ENCODE measurements at regions of chr7 and their contacts with region 1.

Region 1: GRCh38 chr7:114439581-114439980 is 25.0 kb downstream of the FOXP2 start:
- DNase-seq: no peak
- ATAC-seq: no peak
- H3K4me3 ChIP-seq: no peak overlapping the region
- H3K27ac ChIP-seq: no peak overlapping the region
- H3K4me1 ChIP-seq: peaks cover 4% of the 10 kb centered on the region
- H3K27me3 ChIP-seq: no peaks in the 10 kb centered on the region
- CTCF ChIP-seq: no peak

Region 2: GRCh38 chr7:114334989-114335388 is 104.6 kb before region 1 on chr7:
- intact Hi-C with region 1: no loop called
- DNase-seq: no peak
- ATAC-seq: no peak
- H3K4me3 ChIP-seq: no peak overlapping the region
- H3K27ac ChIP-seq: no peak overlapping the region
- H3K4me1 ChIP-seq: no peaks in the 10 kb centered on the region
- H3K27me3 ChIP-seq: no peaks in the 10 kb centered on the region
- CTCF ChIP-seq: no peak

Region 3: DNA sequence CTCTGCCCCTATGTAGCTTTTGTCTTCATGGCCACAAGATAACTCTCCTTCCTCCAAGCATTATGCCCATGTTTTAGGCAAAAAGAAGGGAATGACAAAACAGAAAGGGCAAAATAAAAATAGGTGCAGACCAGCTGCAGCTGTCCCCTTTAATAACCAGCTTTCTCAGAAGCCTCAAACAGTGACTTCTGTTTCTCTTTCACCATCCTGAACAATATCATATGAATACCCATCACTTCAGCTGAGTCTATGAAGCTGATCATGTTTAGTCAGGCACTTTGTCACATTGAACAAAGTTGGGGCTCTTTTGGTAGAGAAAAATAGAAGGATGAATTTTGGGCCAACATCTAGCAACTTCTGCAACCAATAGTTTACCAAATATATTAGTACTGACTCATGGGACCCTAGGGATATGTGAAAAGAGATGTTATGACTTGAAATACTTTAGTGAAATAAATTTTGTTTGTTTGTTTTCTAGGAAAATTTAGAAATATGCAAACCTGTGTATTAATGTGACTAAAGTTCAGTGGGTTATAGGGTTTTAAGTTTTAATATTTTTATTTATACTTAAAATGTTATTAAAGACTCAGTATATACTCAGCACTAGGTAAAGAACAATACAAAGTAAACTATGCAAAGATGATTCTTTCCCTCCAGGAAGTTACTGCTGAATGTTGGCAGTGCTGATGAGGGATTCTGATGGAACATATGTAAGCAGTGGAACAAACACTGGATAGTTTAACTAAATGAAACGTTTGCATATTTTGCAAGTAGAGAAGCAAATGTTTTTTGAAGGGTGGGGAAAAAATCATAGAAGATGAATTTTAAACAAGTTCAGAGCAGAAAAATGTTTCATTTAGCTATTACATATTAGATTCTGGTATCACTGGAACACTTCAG is 108.8 kb after region 1 on chr7:
- intact Hi-C with region 1: loop called in 1 of 2 experiments (anchors 10 kb)
- DNase-seq: no peak
- ATAC-seq: no peak
- H3K4me3 ChIP-seq: no peak overlapping the region
- H3K27ac ChIP-seq: no peak overlapping the region
- H3K4me1 ChIP-seq: no peaks in the 10 kb centered on the region
- H3K27me3 ChIP-seq: no peaks in the 10 kb centered on the region
- CTCF ChIP-seq: no peak